Astrocyte of the cerebellum (primary cell): ENCODE measurements at regions of chr19 and their contacts with region 1.

Region 1: DNA sequence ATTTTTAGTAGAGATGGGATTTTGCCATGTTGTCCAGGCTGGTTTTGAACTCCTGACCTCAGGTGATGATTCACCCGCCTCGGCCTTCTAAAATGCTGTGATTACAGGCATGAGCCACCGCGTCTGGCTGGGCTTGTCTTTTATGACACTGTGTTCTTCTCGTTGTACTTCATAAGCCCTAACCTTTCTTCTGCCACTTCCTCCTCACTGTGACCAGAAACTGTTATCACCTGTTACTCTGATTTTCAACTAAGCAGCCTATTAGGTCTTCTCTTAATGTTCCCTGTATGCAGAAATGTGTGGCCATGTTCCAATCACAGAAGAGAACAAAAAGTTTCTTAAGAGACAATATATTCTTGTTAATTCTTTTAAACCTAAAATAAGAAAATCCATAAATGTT is 16.4 kb downstream of the ZNF790 start:
- DNase-seq: no peak
- H3K4me3 ChIP-seq: no peak overlapping the region
- CTCF ChIP-seq: no peak

Region 2: DNA sequence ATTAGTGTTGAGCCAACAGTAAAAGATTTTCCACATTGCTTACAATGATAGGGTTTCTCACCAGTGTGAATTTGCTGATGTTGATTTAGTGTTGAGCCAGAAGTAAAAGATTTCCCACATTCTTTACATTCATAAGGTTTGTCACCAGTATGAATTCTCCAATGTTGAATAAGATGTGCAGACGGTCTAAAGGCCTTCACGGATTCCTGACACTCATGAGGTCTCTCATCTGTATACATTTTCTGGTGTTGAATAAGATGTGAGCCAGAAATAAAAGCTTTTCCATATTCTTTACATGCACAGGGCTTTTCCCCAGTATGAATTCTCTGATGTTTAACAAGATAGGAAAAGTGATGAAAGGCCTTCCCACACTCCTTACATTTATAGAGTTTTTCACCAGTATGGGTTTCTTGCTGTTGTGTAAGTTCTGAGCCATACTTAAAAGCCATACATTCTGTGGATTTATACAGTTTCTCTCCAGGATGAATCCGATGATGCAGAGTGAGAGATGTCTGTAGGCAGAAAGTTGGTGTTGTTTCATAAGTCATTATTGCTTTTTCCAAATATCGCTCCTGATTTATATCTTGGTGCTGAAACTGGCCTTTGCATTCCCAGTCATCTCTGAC is 71.6 kb before region 1 on chr19:
- in situ Hi-C with region 1: loop called (anchors 5 kb)
- DNase-seq: no peak
- H3K4me3 ChIP-seq: no peak overlapping the region
- CTCF ChIP-seq: no peak

Region 3: DNA sequence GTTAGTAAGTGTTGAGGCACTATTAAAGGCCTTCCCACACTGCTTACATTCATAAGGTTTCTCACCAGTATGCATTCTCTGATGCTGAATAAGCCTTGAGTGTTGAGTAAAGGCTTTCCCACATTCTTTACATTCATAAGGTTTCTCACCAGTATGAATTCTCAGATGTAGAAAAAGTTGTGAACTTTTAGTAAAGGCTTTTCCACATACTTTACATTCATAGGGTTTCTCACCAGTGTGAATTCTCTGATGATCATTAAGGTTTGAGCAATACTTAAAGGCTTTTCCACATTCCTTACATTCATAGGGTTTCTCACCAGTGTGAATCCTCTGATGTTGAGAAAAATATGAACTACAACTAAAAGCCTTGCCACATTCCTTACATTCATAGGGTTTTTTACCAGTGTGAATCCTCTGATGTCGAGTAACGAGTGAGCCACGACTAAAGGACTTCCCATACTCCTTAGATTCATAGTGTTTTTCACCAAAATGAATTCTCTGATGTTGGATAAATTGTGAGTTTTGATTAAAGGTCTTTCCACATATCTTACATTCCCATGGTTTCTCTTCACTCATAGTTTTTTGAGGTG is 70.1 kb after region 1 on chr19:
- in situ Hi-C with region 1: no loop called
- DNase-seq: no peak
- H3K4me3 ChIP-seq: no peak overlapping the region
- CTCF ChIP-seq: no peak